Heart left ventricle (tissue), 16 donors: ENCODE measurements at regions of chr1 and their contacts with region 1.

Region 1: GRCh38 chr1:7646981-7647901 is 123.9 kb upstream of the VAMP3 start:
- DNase-seq: peak; percentile 54 to 82 (median 62)
- ATAC-seq: peak in 1 of 4 donors; percentile 29
- H3K4me3 ChIP-seq: no peak overlapping the region
- H3K27ac ChIP-seq: no peak overlapping the region
- H3K4me1 ChIP-seq: peaks cover 0 to 27% (median 8%) of the 10 kb centered on the region in 12 donors
- H3K27me3 ChIP-seq: peaks cover 0 to 3% (median 0%) of the 10 kb centered on the region in 9 donors
- CTCF ChIP-seq: peak; percentile 85 to 98 (median 94)
- POLR2A ChIP-seq: no peak

Region 2: DNA sequence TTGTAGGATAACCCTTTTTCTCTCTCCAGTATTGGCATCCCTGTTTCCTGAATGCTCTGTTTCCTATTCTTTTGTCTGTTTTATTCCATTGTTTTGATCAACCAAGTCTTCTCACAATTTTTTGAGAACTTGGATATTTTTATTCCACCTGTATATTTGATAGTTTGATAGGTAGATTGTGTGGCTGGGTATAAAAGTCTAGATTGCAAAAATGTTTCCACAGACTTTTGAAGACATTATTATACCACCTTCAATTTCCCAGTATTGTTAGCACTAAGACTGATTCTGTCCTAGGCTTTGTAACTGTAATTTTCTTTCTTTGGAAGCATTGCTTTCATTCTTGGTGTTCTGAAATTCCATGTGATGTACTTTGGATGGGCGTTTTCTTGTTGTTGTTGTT is 936.1 kb before region 1 on chr1:
- intact Hi-C with region 1: loop called in 2 of 10 experiments (anchors 5 to 10 kb)
- DNase-seq: no peak
- ATAC-seq: no peak
- H3K4me3 ChIP-seq: no peak overlapping the region
- H3K27ac ChIP-seq: no peak overlapping the region
- H3K4me1 ChIP-seq: no peaks in the 10 kb centered on the region
- H3K27me3 ChIP-seq: no peaks in the 10 kb centered on the region
- CTCF ChIP-seq: no peak
- POLR2A ChIP-seq: no peak

Region 3: GRCh38 chr1:6794164-6794563 is 853.1 kb before region 1 on chr1:
- intact Hi-C with region 1: loop called in 2 of 10 experiments (anchors 10 kb)
- DNase-seq: no peak
- ATAC-seq: no peak
- H3K4me3 ChIP-seq: no peak overlapping the region
- H3K27ac ChIP-seq: no peak overlapping the region
- H3K4me1 ChIP-seq: peaks cover 4 to 67% (median 37%) of the 10 kb centered on the region in 12 donors
- H3K27me3 ChIP-seq: no peaks in the 10 kb centered on the region
- CTCF ChIP-seq: peak in 11 of 12 donors; percentile 14 to 61 (median 52)
- POLR2A ChIP-seq: no peak

Region 4: GRCh38 chr1:7042322-7043190 is 604.7 kb before region 1 on chr1:
- intact Hi-C with region 1: loop called in 8 of 10 experiments (anchors 2 to 10 kb)
- DNase-seq: no peak
- ATAC-seq: no peak
- H3K4me3 ChIP-seq: no peak overlapping the region
- H3K27ac ChIP-seq: no peak overlapping the region
- H3K4me1 ChIP-seq: no peaks in the 10 kb centered on the region
- H3K27me3 ChIP-seq: peaks cover 0 to 7% (median 0%) of the 10 kb centered on the region in 9 donors
- CTCF ChIP-seq: peak in 11 of 12 donors; percentile 22 to 54 (median 45)
- POLR2A ChIP-seq: no peak

Region 5: GRCh38 chr1:7224644-7225043 is 422.6 kb before region 1 on chr1:
- intact Hi-C with region 1: loop called in 8 of 10 experiments (anchors 2 to 5 kb)
- DNase-seq: peak in 1 of 5 donors; percentile 37
- ATAC-seq: peak in 2 of 4 donors; percentile 28 to 65
- H3K4me3 ChIP-seq: no peak overlapping the region
- H3K27ac ChIP-seq: no peak overlapping the region
- H3K4me1 ChIP-seq: no peaks in the 10 kb centered on the region
- H3K27me3 ChIP-seq: no peaks in the 10 kb centered on the region
- CTCF ChIP-seq: peak in 6 of 12 donors; percentile 6 to 41 (median 20)
- POLR2A ChIP-seq: no peak

Region 6: DNA sequence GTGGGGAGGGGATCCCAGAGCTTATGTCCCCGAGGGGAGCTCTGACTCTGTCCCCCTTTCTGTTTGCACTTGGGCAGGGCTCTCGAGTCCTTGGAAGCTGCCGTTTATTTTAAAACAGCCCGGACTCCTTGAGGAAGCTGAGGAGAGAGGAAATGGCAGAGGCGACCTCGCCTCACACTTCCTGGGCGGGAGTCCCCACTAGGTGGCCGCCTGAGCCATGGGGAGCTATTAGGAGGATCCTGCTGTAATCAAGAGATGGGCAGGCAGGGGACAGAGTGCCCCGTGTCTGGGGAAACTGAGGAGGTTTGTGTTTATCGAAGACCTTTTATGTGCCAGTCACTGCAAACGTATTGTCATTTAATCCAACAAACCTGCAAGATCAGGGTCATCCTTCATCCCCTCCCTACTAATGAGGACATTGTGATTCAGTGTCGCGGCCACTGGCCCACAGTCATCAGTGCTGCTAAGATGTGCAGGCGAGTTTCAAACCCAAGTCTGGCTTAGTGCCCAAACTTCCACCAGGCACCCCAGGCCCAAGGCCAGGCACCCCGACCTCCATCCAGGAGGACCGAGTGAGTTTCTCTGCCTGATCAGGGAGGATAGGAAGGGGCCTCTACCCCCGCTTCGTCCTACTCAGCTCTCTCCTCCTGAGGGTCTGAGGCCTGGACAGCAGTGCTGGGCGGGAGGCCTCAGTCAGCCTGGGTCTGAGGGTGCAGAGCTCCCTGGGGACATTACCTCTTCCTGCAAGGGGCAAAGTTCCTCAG is 193.0 kb before region 1 on chr1:
- intact Hi-C with region 1: loop called in 8 of 10 experiments (anchors 2 to 10 kb)
- DNase-seq: peak in 1 of 5 donors; percentile 32
- ATAC-seq: peak in 3 of 4 donors; percentile 31 to 71 (median 68)
- H3K4me3 ChIP-seq: no peak overlapping the region
- H3K27ac ChIP-seq: no peak overlapping the region
- H3K4me1 ChIP-seq: peaks cover 0 to 7% (median 0%) of the 10 kb centered on the region in 12 donors
- H3K27me3 ChIP-seq: no peaks in the 10 kb centered on the region
- CTCF ChIP-seq: peak; percentile 27 to 66 (median 44)
- POLR2A ChIP-seq: no peak

Region 7: DNA sequence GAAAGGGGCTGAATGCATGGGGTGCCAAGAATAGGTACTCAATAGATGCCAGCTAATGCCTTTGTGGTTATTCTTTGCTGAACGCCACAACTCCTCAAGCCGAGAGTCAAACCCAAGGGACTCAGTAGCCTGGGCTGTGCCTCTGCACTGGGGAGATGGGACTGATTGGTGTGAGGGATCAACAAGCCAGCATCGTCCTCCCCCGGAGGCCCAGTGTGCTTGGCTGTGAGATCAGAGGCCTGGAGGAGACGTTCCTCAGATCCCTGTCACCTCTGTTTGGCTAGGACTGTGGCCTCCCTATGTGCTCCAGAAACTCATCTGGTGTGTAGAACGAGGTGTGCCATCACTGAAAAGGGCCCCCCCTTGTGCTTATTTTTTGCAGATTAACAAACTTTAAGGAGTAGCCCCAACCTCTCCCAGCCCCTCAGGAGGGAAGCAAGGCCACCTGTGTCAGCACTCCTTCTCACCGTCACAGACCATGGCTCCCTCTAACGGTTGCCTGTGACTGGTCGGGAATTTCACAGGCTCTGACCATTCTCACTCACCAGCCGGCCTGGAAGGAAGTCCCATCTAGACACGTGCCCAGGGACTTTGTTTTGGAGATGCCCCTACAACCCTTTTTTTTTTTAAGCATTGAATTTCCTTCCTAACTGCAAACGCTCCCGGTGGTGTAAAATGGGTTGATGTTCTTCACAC is 70.1 kb before region 1 on chr1:
- intact Hi-C with region 1: loop called in 5 of 10 experiments (anchors 2 to 10 kb)
- DNase-seq: peak in 2 of 5 donors; percentile 30 to 35
- ATAC-seq: peak in 3 of 4 donors; percentile 39 to 56 (median 40)
- H3K4me3 ChIP-seq: no peak overlapping the region
- H3K27ac ChIP-seq: no peak overlapping the region
- H3K4me1 ChIP-seq: peaks cover 0 to 9% (median 0%) of the 10 kb centered on the region in 12 donors
- H3K27me3 ChIP-seq: no peaks in the 10 kb centered on the region
- CTCF ChIP-seq: peak in 11 of 12 donors; percentile 14 to 51 (median 29)
- POLR2A ChIP-seq: no peak